Left cardiac atrium (tissue), 4 donors: ENCODE measurements at regions of chr9 and their contacts with region 1.

Region 1: GRCh38 chr9:71911253-71912074 is at the start of gene C9orf85:
- DNase-seq: peak; percentile 99
- ATAC-seq: peak; percentile 98 to 99
- total RNA-seq, gene C9orf85: 6.7 to 7.3 TPM

Region 2: GRCh38 chr9:71748280-71748743 is 163.2 kb before region 1 on chr9:
- intact Hi-C with region 1: no loop called
- DNase-seq: no peak
- ATAC-seq: peak; percentile 67 to 83

Region 3: GRCh38 chr9:71768388-71769174 is 142.9 kb before region 1 on chr9 and contains the start of gene CEMIP2:
- intact Hi-C with region 1: loop called in 1 of 2 experiments (anchors 10 kb)
- DNase-seq: peak; percentile 92
- ATAC-seq: peak; percentile 93
- total RNA-seq, gene CEMIP2: 12.0 to 31.9 TPM

Region 4: GRCh38 chr9:71819115-71819739 is 92.2 kb before region 1 on chr9:
- intact Hi-C with region 1: loop called in 1 of 2 experiments (anchors 10 kb)
- DNase-seq: peak; percentile 31
- ATAC-seq: no peak

Region 5: GRCh38 chr9:71863631-71864030 is 47.8 kb before region 1 on chr9:
- intact Hi-C with region 1: no loop called
- DNase-seq: no peak
- ATAC-seq: peak in 1 of 2 donors; percentile 22

Region 6: GRCh38 chr9:71984403-71984802 is 72.9 kb after region 1 on chr9:
- intact Hi-C with region 1: loop called in 1 of 2 experiments (anchors 10 kb)
- DNase-seq: peak; percentile 56
- ATAC-seq: peak; percentile 85 to 96